PC-3 (cell line): ENCODE measurements at regions of chr6 and their contacts with region 1.

Region 1: GRCh38 chr6:160297310-160297709 is 38.7 kb upstream of the SLC22A2 start:
- DNase-seq: peak; percentile 51
- ATAC-seq: peak; percentile 87
- H3K4me3 ChIP-seq: no peak overlapping the region
- H3K27ac ChIP-seq: no peak overlapping the region
- H3K4me1 ChIP-seq: peaks cover 3% of the 10 kb centered on the region; the same call in 1 of the 2 replicates
- H3K27me3 ChIP-seq: no peaks in the 10 kb centered on the region
- CTCF ChIP-seq: peak; percentile 46

Region 2: DNA sequence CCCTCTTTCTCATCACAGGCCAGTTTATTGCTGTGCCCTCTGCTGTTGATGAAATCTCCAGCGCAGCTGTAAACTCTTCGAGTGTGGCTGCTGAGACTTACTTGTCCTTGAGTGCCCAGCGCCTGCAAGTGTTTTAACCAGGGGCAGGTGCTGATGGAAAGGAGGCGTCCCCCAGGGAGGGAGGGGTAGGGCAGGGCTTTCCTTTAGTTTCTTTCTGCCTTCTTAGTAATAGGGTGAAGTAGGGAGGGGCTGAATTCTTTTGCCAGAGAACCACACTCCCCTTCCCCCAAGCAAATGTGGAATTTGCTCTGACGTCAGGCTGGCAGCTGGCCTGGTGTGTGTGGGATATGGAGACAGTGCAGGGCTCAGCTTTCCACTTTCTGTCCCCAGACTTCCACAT is 267.2 kb before region 1 on chr6:
- CTCF ChIA-PET with region 1: no interaction called
- POLR2A ChIA-PET with region 1: no interaction called
- intact Hi-C with region 1: no loop called
- DNase-seq: peak; percentile 91
- ATAC-seq: peak; percentile 85
- H3K4me3 ChIP-seq: no peak overlapping the region
- H3K27ac ChIP-seq: peak overlapping the region; percentile 78
- H3K4me1 ChIP-seq: peaks cover 24% of the 10 kb centered on the region
- H3K27me3 ChIP-seq: no peaks in the 10 kb centered on the region
- CTCF ChIP-seq: no peak

Region 3: DNA sequence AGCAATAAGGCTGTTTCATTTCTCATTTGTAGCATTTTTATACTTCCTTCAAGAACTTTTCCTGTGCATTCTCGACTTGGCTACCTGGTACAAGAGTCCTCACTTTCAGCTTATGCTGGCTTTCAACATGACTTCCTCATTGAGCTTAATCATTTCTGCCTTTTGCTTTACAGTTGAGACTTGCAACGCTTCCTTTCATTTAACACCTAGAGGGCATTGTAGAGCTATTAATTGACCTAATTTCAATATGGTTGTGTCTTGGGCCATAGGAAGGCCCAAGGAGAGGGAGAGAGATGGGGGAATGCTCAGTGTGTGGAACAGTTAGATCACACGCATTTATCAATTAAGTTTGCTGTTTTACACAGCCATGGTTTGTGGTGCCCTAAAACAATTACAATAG is 75.9 kb before region 1 on chr6:
- CTCF ChIA-PET with region 1: interaction called, 7 read pairs
- POLR2A ChIA-PET with region 1: no interaction called
- intact Hi-C with region 1: loop called (anchors 2 kb)
- DNase-seq: peak; percentile 22
- ATAC-seq: no peak
- H3K4me3 ChIP-seq: no peak overlapping the region
- H3K27ac ChIP-seq: no peak overlapping the region
- H3K4me1 ChIP-seq: no peaks in the 10 kb centered on the region
- H3K27me3 ChIP-seq: no peaks in the 10 kb centered on the region
- CTCF ChIP-seq: peak; percentile 33; the same call in 1 of the 2 replicates

Region 4: DNA sequence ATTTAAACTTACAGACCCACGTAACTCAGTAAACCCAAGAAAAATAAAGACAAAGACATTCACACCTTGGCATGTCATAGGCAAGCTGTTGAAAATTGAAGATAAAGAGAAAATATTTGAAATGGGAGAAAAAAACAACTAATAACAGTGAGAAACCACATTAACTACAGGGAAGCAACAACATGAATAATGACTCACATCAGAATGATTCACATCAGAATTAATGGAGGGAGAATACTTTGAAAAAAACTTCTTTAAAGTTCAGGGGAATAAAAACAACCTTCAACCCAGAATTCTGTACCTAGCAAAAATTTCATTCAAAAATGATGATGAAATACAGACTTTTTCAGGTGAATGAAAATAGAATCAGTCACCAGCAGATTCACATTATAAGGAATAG is 18.0 kb after region 1 on chr6:
- CTCF ChIA-PET with region 1: no interaction called
- POLR2A ChIA-PET with region 1: no interaction called
- intact Hi-C with region 1: no loop called
- DNase-seq: peak; percentile 35
- ATAC-seq: no peak
- H3K4me3 ChIP-seq: no peak overlapping the region
- H3K27ac ChIP-seq: no peak overlapping the region
- H3K4me1 ChIP-seq: no peaks in the 10 kb centered on the region
- H3K27me3 ChIP-seq: no peaks in the 10 kb centered on the region
- CTCF ChIP-seq: no peak